ENCODE measurements at regions of chr1 and their contacts with region 1.

Region 1: DNA sequence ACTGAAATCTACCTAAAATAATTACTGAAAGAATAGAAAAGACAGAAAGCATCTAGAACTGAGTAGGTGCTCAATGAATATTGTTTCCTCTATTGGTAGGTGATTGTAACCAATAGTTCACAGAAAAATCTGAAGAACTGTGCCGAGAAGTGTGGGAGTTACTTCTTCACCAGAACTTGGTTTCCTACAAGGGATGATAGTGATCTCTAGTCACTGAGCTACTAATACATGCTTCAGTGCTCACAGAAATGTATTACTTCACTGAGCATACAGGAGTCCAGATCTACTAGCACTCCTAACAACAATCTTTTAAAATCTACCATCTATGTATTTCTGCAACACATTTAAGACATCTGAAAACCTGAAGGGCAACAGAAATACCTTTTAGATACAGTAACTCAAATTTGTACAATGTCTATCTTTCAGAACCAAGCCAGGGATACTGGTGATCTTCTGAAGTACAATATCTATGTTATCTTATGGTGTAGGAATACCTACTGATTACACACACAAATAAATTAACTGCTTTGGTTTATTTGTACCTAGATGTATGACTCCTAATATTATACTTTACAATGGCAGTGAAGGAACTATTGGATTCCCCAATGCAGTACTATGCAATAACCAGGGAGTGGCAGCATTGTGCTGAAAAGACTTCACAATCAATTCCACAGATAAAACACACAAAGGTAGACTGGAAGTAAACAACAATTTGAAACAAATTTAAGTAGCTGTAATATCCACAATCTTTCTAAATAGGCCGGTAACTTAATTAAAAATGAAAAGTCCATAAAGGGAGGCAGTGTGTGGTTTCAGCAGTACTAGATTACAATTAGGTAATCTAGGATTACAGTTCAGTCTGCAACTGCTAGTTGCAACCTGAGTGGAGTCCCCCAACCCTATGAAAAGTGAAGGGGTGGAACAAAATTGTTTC is 243.0 kb downstream of the SLC45A1 start:
- DNase-seq: peak; percentile 64
- ATAC-seq: peak; percentile 68
- H3K4me3 ChIP-seq: no peak overlapping the region
- H3K27ac ChIP-seq: no peak overlapping the region
- H3K4me1 ChIP-seq: peaks cover 14% of the 10 kb centered on the region
- H3K27me3 ChIP-seq: no peaks in the 10 kb centered on the region
- CTCF ChIP-seq: peak; percentile 94

Region 2: DNA sequence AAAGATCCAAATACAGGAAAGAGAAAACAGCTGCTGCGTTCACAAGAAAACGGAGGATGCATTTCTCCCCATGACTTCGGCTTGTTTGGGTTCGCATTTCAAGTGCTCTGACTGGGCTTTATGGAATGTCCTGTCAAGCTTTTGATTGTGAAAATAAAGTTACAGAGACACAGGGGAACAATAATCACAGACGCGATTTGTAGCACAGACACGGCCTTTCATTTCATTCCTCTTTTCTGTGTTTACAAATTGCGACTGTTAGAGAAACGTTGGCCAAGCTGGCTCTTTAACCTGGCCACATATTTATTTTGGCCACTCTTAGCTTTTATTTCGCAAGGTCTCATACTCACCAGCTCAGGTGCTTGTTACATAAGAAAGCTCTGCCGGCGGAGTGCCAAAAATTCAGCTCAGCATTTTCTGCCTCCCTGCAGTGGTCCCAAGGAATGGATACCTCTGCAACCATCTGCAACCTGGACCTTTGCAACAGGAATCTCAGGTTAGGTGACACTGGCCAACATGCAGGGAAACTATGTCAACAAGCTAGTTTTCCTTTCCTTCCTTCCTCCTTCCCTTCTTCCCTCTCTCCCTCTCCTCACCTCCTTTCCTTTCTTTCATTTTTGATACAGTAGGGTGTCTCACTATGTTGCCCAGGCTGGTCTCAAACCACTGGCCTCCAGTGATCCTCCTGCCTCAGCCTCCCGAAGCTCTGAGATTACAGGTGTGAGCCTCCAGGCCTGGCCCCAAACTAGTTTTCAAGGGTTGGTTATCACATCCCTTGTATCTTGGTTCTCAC is 301.2 kb before region 1 on chr1:
- CTCF ChIA-PET with region 1: no interaction called
- POLR2A ChIA-PET with region 1: no interaction called
- intact Hi-C with region 1: no loop called
- DNase-seq: peak; percentile 86
- ATAC-seq: peak; percentile 42
- H3K4me3 ChIP-seq: peak overlapping the region; percentile 56
- H3K27ac ChIP-seq: peak overlapping the region; percentile 97
- H3K4me1 ChIP-seq: peaks cover 30% of the 10 kb centered on the region
- H3K27me3 ChIP-seq: no peaks in the 10 kb centered on the region
- CTCF ChIP-seq: no peak

Region 3: GRCh38 chr1:8584316-8584715 is 23.4 kb after region 1 on chr1:
- CTCF ChIA-PET with region 1: no interaction called
- POLR2A ChIA-PET with region 1: no interaction called
- intact Hi-C with region 1: no loop called
- DNase-seq: no peak
- ATAC-seq: no peak
- H3K4me3 ChIP-seq: no peak overlapping the region
- H3K27ac ChIP-seq: no peak overlapping the region
- H3K4me1 ChIP-seq: no peaks in the 10 kb centered on the region
- H3K27me3 ChIP-seq: no peaks in the 10 kb centered on the region
- CTCF ChIP-seq: no peak

Region 4: GRCh38 chr1:8604041-8604945 is 43.4 kb after region 1 on chr1:
- CTCF ChIA-PET with region 1: no interaction called
- POLR2A ChIA-PET with region 1: no interaction called
- intact Hi-C with region 1: no loop called
- DNase-seq: no peak
- ATAC-seq: no peak
- H3K4me3 ChIP-seq: no peak overlapping the region
- H3K27ac ChIP-seq: no peak overlapping the region
- H3K4me1 ChIP-seq: 0 out of 2 replicates have a peak, but pooled peaks cover 5% of the 10 kb centered on the region
- H3K27me3 ChIP-seq: no peaks in the 10 kb centered on the region
- CTCF ChIP-seq: no peak

Region 5: DNA sequence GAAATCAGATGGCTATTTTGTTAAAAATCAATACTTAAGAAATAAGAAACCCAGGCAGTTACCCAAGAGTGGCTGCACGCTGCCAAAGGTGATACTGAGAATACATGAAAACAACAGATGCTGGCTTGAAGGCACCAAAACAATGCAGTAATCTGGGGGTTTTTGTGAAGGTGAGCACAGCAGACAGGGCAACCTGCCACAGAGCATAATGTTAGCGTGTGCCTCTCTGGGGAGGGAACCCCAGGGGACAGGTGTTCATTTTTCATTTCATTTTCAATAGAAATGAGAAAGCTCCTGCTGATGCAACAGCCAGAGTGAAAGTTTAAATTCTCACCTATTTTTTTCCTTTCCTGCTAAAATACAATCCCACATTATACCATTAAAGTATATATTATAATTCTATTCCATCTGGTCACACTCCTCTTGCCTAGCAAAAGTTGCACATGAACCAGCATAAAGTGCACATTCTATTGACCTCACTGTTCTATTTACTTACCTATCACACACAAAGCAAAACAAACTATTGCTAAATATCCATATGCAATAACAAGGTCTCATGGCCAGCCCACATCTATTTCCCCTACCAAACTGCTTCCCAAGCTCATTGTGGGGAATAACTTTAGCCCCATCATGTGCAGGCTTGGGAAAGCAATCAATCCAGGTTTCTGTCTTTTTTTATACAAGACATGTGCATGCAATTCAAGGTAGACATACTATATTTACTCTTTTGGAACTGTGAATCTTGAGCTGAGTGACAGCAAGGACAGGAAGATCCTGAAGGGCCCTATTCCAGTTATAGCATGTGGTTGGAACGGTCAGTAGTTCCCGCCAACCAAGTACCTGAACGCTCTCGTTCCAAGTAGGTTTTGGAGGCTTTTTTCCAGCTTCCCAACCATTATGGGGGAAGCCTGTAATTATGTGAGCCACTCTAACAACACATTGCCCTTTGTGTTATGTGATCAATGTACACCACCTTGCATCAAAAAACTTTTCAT is 83.0 kb after region 1 on chr1:
- CTCF ChIA-PET with region 1: no interaction called
- POLR2A ChIA-PET with region 1: no interaction called
- intact Hi-C with region 1: no loop called
- DNase-seq: peak; percentile 8
- ATAC-seq: no peak; the same call in 1 of the 2 replicates
- H3K4me3 ChIP-seq: no peak overlapping the region
- H3K27ac ChIP-seq: no peak overlapping the region
- H3K4me1 ChIP-seq: peaks cover 18% of the 10 kb centered on the region; the same call in 1 of the 2 replicates
- H3K27me3 ChIP-seq: no peaks in the 10 kb centered on the region
- CTCF ChIP-seq: no peak

Region 6: DNA sequence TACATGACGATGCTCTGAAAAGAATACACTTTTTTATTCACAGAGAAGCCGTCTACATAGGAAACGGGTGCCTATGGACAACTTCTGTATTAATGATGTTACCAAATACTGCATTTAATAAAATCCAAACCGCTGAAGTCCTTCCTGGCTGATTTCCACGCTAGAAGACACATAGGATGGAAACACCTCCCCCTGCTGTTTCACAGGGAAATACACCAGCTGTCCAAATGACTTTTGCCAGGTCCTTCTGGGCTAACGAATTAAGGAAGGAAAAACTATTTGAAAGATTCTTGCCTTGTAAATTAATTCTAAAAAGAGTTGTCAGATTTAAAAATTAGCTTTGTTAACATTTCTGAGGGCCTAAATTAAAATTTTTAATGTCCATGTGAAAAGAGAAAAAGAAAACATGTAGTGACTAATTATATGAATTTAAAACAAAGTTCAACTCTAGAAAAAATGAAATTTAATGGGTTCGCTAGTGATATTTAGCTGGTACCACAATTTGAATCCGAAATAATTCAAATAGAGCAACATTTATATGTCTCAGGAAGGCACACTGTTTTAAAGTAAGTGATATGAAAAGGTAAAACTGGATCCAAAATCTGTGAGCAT is 110.5 kb after region 1 on chr1:
- CTCF ChIA-PET with region 1: interaction called, 4 read pairs
- POLR2A ChIA-PET with region 1: no interaction called
- intact Hi-C with region 1: loop called (anchors 1 kb)
- DNase-seq: peak; percentile 71
- ATAC-seq: 0 out of 2 replicates have a peak, but pooled peaks have one; percentile 18
- H3K4me3 ChIP-seq: no peak overlapping the region
- H3K27ac ChIP-seq: 0 out of 2 replicates have a peak overlapping the region, but pooled peaks have one; percentile 2
- H3K4me1 ChIP-seq: peaks cover 57% of the 10 kb centered on the region
- H3K27me3 ChIP-seq: no peaks in the 10 kb centered on the region
- CTCF ChIP-seq: peak; percentile 90

Region 7: DNA sequence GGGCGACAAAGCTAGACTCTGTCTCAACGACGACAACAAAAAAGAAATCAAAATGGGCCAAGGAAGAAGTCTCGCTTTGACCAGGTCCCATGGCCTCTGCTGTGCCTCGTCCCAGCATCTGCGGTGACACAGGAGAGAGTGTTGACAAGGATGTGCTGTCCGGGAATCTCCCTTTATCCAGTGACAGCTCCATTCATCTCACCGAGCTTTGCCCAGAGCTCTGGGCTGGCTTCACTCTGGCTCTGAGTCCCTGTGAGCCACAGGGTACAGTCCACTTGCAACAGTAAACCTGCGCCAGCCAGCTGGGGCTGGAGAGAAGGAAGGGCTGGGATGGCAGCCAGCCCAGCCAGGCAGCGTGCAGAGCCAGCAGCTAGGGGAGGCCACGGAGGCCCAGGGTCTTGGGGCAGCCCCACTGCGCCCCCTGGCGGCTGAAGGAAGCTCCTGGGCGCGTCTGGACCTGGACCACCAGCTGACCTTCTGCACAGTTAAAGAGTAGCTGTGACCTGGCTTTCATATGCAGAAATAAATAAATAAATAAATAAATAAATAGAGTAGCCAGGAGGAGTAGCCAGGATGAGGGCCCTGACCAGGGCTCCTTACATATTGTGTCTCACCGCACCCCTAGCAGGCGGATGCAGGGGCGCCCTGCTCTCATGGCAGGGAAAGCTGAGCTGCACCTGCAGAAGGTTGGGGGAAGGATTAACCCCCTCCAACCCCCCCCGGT is 287.9 kb after region 1 on chr1:
- CTCF ChIA-PET with region 1: interaction called, 5 read pairs
- POLR2A ChIA-PET with region 1: no interaction called
- intact Hi-C with region 1: loop called (anchors 1 kb)
- DNase-seq: peak; percentile 91
- ATAC-seq: peak; percentile 98
- H3K4me3 ChIP-seq: no peak overlapping the region
- H3K27ac ChIP-seq: no peak overlapping the region
- H3K4me1 ChIP-seq: peaks cover 5% of the 10 kb centered on the region
- H3K27me3 ChIP-seq: no peaks in the 10 kb centered on the region
- CTCF ChIP-seq: peak; percentile 73

Measured in PC-3 (cell line).